ENCODE measurements at regions of chr12 and their contacts with region 1.

Region 1: DNA sequence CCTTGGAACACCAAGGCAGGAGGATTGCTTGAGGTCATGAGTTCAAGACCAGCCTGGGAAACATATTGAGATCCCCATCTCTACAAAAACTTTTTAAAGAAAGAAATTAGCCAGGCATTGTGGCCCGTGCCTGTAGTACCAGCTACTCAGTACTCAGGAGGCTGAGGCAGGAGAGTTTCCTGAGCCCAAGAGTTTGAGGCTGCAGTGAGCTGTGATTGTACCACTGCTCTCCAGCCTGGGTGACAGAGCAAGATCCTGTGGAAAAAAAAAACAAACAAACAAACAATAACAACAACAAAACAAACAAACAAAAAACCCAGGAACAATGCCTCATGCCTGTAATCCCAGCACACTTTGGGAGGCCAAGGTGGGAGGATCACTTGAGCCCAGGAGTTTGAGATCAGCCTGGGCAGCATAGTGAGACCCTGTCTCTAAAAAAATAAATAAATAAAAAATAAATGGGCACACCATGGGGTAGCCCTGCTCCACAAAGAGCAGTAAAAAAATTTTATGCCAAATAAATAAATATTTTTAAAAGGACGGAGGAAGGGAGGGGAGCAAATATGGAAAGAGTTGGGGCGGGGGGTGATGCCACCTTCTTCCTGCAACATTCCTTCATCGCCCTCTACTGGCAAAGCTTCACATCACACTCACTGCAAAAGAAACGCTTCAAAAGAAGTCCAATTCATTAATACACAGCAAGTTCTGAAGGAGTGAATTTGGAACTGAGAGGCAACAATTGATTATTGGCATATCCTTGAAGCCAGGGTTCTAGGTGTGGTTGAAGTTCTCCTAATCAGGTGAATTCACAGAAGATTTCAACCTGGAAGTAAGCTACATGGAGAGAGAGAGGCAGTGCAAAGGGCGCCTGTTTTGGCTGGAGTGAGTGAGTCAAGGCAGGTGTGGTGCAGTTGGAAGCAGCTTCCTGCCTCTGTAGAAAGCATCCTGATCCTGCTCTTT is 8.8 kb upstream of the GNPTAB start:
- DNase-seq: peak; percentile 73
- H3K4me3 ChIP-seq: no peak overlapping the region
- H3K27ac ChIP-seq: no peak overlapping the region
- H3K4me1 ChIP-seq: no peaks in the 10 kb centered on the region
- H3K27me3 ChIP-seq: no peaks in the 10 kb centered on the region
- CTCF ChIP-seq: peak; percentile 71 to 84
- POLR2A ChIP-seq: no peak

Region 2: DNA sequence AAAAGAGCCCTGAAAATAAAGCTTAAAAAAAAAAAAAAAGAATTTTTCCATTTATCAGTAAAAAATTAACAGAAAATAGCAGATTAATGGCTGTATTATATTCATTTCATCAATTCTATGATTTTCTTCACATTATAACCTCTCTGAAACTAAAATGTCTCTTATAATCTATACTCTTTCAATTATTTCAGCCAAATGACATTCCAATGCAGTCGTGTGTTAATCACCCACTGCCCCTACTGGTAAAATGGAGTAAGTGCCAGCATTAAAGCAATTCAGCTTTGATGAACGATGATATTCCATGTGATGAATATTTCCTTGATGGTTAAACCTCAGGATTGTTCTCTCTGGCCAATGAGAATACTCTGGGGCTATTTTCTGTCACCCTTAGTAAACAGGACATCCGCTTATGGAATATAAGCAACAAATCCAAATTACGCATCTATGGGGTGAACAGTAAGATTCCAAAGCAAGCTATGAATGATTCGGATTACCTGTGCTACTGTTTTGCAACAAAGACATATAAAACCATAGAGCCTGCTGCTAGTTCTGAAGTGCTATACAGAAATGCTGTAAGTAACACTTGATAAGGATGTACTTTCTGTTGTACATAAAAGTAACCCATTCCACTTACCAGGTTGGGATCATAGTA is 80.1 kb before region 1 on chr12:
- CTCF ChIA-PET with region 1: interaction called, 10 read pairs
- POLR2A ChIA-PET with region 1: no interaction called
- dilution Hi-C with region 1: no loop called
- intact Hi-C with region 1: no loop called
- DNase-seq: peak; percentile 33
- H3K4me3 ChIP-seq: no peak overlapping the region
- H3K27ac ChIP-seq: no peak overlapping the region
- H3K4me1 ChIP-seq: no peaks in the 10 kb centered on the region
- H3K27me3 ChIP-seq: no peaks in the 10 kb centered on the region
- CTCF ChIP-seq: peak; percentile 53 to 64
- POLR2A ChIP-seq: no peak

Region 3: DNA sequence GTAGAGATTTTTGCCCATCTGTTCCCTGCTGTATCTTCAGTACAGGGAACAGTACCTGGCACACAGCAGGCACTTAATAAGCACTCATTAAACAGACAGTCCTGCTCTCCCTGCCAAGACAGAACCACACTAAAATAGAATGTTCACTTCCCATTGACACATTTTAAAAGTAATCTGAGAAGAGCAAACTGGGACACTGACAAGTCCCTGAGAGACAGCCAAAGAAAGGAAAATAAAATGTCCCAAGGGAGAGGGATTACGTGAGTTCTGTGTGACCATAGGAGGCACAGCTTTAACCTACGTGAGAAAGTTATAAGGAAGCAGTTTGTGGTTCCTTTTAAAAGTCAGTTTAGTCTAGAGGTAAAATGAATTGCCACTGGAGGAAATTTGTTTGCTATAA is 56.5 kb before region 1 on chr12:
- CTCF ChIA-PET with region 1: interaction called, 16 read pairs
- POLR2A ChIA-PET with region 1: no interaction called
- dilution Hi-C with region 1: no loop called
- intact Hi-C with region 1: no loop called
- DNase-seq: no peak
- H3K4me3 ChIP-seq: no peak overlapping the region
- H3K27ac ChIP-seq: no peak overlapping the region
- H3K4me1 ChIP-seq: no peaks in the 10 kb centered on the region
- H3K27me3 ChIP-seq: no peaks in the 10 kb centered on the region
- CTCF ChIP-seq: no peak
- POLR2A ChIP-seq: no peak

Region 4: DNA sequence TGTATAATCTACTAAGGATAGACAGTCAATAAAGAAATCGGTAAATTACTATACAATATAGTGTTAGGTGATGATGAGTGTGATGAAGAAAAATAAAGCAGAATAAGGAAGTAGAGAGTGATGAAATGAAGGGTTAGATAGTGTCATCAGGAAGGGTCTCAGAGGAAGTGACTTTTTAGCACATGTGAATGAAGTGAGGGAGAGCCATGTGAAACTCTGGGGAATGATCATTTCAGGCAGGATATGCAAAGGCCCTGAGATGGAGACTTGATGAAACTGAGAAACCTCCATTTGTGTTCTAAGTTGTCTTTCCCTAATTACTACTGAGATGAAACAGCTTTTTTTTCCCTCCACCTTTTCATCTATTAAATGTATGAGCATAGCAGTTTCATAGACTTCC is 10.6 kb after region 1 on chr12:
- CTCF ChIA-PET with region 1: interaction called, 17 read pairs
- POLR2A ChIA-PET with region 1: no interaction called
- dilution Hi-C with region 1: no loop called
- intact Hi-C with region 1: no loop called
- DNase-seq: no peak
- H3K4me3 ChIP-seq: no peak overlapping the region
- H3K27ac ChIP-seq: no peak overlapping the region
- H3K4me1 ChIP-seq: no peaks in the 10 kb centered on the region
- H3K27me3 ChIP-seq: no peaks in the 10 kb centered on the region
- CTCF ChIP-seq: no peak
- POLR2A ChIP-seq: no peak

Region 5: DNA sequence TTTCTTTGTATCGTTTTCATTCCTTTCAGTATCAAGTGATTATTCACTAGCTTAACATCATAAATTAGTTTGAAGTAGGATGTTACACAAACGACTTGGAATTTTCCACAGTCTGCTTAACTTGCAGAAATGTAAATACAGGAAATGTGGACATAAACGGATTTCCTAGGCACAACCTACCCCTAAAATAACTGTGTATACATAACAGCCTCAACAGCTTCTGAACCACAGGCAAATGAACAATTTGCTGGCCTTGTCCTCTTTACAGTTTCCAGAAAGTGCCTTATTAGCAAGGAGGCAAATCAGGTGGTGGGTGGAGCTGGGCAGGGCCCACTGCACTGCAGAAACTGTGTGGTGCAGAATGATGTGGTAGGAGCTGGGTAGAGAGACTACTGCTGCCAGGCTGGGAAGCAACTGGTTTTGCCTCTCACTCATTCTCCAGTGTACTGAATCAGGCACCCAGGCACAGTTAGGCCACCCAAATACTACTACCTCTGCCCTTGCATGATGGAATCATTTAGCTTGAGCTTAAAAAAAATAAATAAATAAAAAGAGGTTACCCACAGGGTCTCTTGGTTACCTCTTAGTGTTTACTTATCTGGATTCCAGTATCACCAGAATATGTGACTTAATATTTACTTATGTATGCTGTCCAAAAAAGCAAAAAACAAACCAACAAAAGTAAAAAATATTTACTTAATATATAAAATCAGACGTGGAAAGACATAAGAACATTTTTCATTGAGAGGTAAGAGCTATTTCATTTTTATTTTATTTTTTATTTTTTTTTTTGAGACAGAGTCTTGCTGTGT is 52.1 kb after region 1 on chr12:
- CTCF ChIA-PET with region 1: interaction called, 19 read pairs
- POLR2A ChIA-PET with region 1: no interaction called
- dilution Hi-C with region 1: no loop called
- intact Hi-C with region 1: no loop called
- DNase-seq: peak; percentile 95
- H3K4me3 ChIP-seq: peak overlapping the region in 1 of 3 experiments; percentile 31
- H3K27ac ChIP-seq: peak overlapping the region; percentile 56
- H3K4me1 ChIP-seq: peaks cover 40% of the 10 kb centered on the region
- H3K27me3 ChIP-seq: no peaks in the 10 kb centered on the region
- CTCF ChIP-seq: no peak
- POLR2A ChIP-seq: no peak

Measured in endothelial cell of umbilical vein (primary cell).